Activated T-helper 2 cell treated with anti-CD3 and anti-CD28 coated beads, Interferon-gamma antibody, Interleukin-2, Interleukin-4, amounts not matched to agents 10 μg/mL and 5 μg/mL and 100 μg/mL, durations not matched to agents 14 hours and 24 hours and 36 hours (primary cell): ENCODE measurements at regions of chr10 and their contacts with region 1.

Region 1: DNA sequence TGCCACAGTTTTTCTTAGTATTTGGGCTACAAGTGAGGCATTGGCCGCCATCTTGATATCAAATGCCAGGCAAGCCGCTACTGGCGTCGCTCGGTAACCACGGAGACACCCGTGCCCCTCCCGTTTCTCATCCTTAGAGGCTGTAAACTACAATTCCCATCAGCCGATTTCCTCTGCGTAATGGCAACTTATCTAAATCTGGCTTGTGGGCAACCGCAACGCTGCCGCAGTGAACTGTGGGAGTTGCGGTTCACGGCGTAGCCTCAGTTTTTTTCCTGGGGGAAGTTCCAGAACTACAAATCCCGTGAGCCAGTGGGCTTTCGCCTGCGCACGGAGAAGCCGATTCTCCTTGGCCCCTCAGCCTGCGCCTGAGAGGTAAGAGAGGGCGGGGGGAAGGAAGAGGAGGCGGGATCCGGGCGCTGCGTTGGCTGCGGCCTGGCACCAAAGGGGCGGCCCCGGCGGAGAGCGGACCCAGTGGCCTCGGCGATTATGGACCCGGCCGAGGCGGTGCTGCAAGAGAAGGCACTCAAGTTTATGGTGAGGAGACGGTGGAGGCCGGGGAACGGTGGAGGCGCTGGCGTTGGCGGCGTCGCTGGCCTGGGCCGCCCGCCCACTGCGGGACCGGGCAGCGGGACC is at the start of gene BTRC:
- DNase-seq: peak; percentile 97
- H3K4me3 Mint-ChIP-seq: peak within 1 kb of the TSS; percentile 88
- H3K27ac Mint-ChIP-seq: peak within 1 kb of the TSS; percentile 95
- H3K4me1 Mint-ChIP-seq: peaks cover 15% of the 10 kb centered on the region
- H3K27me3 Mint-ChIP-seq: peaks cover 17% of the 10 kb centered on the region
- total RNA-seq, gene BTRC: 18.2 and 21.0 TPM in 2 replicates

Region 2: DNA sequence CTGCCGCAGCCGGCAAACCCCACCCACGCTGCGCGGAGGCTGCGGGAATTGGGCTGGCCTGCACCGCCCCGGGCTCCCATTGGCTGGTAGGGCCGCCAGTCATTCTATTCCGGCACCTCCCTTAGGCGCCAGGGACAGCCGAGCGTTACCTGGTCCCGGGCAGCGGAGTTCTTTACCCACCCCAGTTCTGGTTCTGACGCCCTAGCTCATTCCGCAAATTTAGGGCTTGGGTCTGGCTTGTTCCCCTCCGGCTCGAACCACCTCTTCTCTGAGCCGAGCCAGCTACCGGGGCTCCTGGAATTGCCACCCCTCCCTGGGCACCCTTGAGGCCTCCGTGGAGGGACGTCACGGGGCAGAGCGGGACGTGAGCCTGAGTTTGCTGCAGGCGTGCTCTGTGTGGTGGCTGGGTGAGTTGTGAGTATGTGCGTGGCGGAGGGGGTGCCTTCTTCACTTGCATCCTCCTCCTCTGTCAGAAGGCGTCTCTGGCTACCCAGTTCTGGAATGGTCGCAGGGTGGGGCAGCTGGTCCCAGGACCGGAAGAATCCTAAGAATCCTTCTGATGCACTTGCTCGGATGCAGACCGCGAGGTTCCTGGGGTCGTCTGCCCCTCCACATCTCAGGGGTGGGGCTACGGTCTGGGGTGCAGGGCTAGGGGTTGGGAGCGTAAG is 322.5 kb before region 1 on chr10 and contains the starts of genes PDZD7 and SFXN3:
- intact Hi-C with region 1: loop called (anchors 5 kb)
- DNase-seq: peak; percentile 94
- H3K4me3 Mint-ChIP-seq: peak within 1 kb of the TSS; percentile 85
- H3K27ac Mint-ChIP-seq: peak within 1 kb of the TSS; percentile 94
- H3K4me1 Mint-ChIP-seq: peaks cover 15% of the 10 kb centered on the region
- H3K27me3 Mint-ChIP-seq: peaks cover 21% of the 10 kb centered on the region
- total RNA-seq, gene PDZD7: 0.53 and 0.64 TPM in 2 replicates
- total RNA-seq, gene SFXN3: 41.3 and 44.3 TPM in 2 replicates

Region 3: DNA sequence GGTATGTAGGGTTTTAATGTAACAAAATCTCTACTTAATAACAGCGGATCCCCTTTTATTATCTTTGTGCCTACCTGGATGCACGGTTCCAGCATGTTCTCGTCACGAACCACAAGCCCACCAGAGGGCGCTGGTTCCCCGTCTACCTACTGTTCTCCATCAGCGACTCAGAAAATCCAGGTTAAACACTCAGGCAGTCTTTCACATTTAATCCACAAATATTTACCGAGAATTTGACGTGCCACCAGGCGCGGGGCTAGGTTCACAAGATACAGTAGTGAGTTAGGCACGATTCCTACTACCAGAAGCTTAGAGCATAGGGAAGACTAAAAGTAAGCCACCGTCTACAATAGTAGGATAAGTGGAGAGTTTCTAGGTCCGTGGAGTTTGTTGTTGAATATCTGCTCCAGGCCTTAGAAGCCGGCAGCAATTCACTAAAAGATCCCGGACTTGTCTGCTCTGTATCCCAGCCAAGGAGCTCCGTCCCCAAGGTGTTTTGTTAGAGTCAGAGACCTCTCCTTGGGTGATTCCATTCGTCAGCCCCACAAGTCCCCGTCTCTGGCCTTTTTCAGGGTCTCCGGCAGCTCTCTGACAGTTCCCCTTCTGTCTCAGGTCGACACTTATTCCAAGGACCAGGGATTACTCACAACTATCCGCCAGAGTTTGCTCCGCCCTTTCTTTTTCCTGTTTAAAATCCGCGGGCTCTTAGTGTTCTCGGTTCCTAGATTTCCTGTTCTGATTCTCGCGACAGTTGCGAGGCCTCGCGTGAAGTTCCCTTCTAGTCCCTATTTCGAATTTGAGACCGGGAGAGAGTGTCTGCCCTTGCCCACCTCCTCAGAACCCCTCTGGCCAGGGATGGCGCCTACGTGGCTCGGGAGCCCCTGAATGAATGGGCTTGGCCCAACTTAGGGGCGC is 293.5 kb before region 1 on chr10:
- intact Hi-C with region 1: loop called (anchors 10 kb)
- DNase-seq: peak; percentile 87
- H3K4me3 Mint-ChIP-seq: peak overlapping the region; percentile 95
- H3K27ac Mint-ChIP-seq: peak overlapping the region; percentile 85
- H3K4me1 Mint-ChIP-seq: peaks cover 27% of the 10 kb centered on the region
- H3K27me3 Mint-ChIP-seq: peaks cover 23% of the 10 kb centered on the region

Region 4: GRCh38 chr10:101380353-101381017 is 26.7 kb after region 1 on chr10:
- intact Hi-C with region 1: loop called (anchors 1 kb)
- DNase-seq: no peak
- H3K4me3 Mint-ChIP-seq: no peak overlapping the region
- H3K27ac Mint-ChIP-seq: peak overlapping the region; percentile 69
- H3K4me1 Mint-ChIP-seq: peaks cover 20% of the 10 kb centered on the region
- H3K27me3 Mint-ChIP-seq: no peaks in the 10 kb centered on the region

Region 5: GRCh38 chr10:101818119-101818871 is 464.5 kb after region 1 on chr10 and contains the start of gene OGA:
- intact Hi-C with region 1: loop called (anchors 5 kb)
- DNase-seq: peak; percentile 97
- H3K4me3 Mint-ChIP-seq: peak within 1 kb of the TSS; percentile 90
- H3K27ac Mint-ChIP-seq: peak within 1 kb of the TSS; percentile 95
- H3K4me1 Mint-ChIP-seq: peaks cover 40% of the 10 kb centered on the region
- H3K27me3 Mint-ChIP-seq: no peaks in the 10 kb centered on the region
- total RNA-seq, gene OGA: 119 and 122 TPM in 2 replicates